Caco-2 (cell line): ENCODE measurements at regions of chr11 and their contacts with region 1.

Region 1: GRCh38 chr11:777288-778255 is at the start of gene GATD1:
- DNase-seq: peak; percentile 91 to 98
- H3K4me3 ChIP-seq: peak within 1 kb of the TSS; percentile 89
- H3K4me3 Mint-ChIP-seq: peak within 1 kb of the TSS; percentile 80
- H3K27ac Mint-ChIP-seq: peak within 1 kb of the TSS; percentile 42
- H3K4me1 ChIP-seq: peaks cover 13% of the 10 kb centered on the region
- H3K4me1 Mint-ChIP-seq: no peaks in the 10 kb centered on the region
- H3K27me3 ChIP-seq: no peaks in the 10 kb centered on the region
- H3K27me3 Mint-ChIP-seq: no peaks in the 10 kb centered on the region
- CTCF ChIP-seq: no peak
- total RNA-seq, gene GATD1: 85.0 and 91.5 TPM in 2 replicates

Region 2: DNA sequence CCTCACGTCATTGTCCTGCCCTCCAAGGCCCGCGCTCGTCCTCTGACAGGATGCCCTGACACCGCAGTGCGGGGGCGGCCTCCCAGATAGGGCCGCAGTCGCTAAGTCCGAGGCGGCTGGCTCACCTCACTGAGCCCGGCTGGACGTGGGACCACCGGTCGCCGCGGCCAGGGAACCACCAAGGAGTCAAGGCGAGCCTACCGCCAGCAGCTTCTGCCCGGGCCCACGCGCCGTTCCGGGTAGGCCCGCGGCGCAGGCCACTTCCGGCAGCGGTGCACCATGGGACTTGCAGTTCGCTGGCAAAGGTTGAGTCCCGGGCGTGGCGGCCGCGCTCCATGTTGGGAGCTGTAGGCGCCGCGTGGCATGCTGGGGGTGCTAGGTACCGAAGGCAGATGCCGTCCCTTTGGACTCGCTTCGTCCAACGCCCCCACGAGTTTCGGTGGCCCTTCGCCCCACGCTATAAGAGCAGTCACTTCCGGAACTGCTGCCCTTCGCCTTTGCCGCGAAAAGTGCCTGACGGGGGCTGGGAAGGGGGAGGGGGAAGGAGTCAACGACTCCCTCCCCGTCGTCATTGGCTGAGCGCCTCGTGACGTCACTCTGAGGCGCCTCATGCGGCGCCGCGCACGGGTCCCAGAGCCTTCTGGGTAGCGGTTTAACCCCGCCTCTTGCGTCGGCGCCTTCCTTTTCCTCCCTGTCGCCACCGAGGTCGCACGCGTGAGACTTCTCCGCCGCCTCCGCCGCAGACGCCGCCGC is 31.9 kb after region 1 on chr11 and contains the start of gene RPLP2:
- CTCF ChIA-PET with region 1: no interaction called
- POLR2A ChIA-PET with region 1: interaction called, 14 read pairs
- intact Hi-C with region 1: no loop called
- DNase-seq: peak; percentile 97
- H3K4me3 ChIP-seq: peak within 1 kb of the TSS; percentile 98
- H3K4me3 Mint-ChIP-seq: peak within 1 kb of the TSS; percentile 98
- H3K27ac Mint-ChIP-seq: peak within 1 kb of the TSS; percentile 99
- H3K4me1 ChIP-seq: peaks cover 10% of the 10 kb centered on the region
- H3K4me1 Mint-ChIP-seq: no peaks in the 10 kb centered on the region
- H3K27me3 ChIP-seq: no peaks in the 10 kb centered on the region
- H3K27me3 Mint-ChIP-seq: no peaks in the 10 kb centered on the region
- CTCF ChIP-seq: no peak
- total RNA-seq, gene RPLP2: 2,622 and 2,843 TPM in 2 replicates

Region 3: DNA sequence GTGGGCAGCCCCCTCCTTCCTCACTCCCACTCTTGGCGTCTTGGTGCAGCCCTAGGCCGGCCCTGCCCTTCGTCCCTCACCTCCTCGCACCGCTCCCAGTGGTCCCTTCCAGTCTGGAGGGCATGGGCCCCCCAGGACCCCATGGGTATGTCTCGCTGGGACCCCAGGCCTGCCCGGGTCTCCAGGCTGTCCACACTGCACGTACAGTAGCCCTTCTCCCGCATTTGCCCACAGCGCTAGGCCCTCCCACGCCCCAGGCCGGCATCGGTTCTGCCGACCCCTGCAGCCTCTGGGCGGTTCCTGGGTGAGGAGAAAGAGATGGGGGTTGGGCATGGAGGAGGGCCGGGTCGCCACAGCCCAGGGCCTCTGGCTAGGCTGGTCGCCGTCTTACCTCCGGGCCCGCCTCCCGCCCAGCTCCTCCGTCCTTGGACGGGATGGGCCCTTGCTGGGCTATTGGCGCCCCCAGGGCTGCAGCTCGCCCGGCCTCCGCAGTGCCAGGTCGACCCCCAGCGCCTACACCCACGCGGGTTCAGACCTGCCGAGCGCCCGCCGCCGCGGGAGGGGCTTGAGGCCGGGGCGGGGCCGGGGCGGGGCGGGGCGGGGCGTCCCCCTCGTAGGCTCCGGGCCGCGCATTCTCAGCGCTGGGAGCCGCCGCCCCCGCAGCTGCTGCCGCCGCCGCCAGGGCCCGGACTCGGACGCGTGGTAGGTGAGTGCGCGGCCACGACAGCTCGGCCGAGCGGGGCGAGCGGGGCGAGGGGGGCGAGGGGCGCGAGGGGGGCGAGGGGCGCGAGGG is 54.9 kb after region 1 on chr11 and contains the start of gene CD151:
- CTCF ChIA-PET with region 1: no interaction called
- POLR2A ChIA-PET with region 1: interaction called, 12 read pairs
- intact Hi-C with region 1: no loop called
- DNase-seq: peak in 1 of 2 experiments; percentile 72
- H3K4me3 ChIP-seq: peak within 1 kb of the TSS; percentile 81
- H3K4me3 Mint-ChIP-seq: peak within 1 kb of the TSS; percentile 79
- H3K27ac Mint-ChIP-seq: peak within 1 kb of the TSS; percentile 71
- H3K4me1 ChIP-seq: peaks cover 34% of the 10 kb centered on the region
- H3K4me1 Mint-ChIP-seq: peaks cover 17% of the 10 kb centered on the region
- H3K27me3 ChIP-seq: no peaks in the 10 kb centered on the region
- H3K27me3 Mint-ChIP-seq: no peaks in the 10 kb centered on the region
- CTCF ChIP-seq: no peak
- total RNA-seq, gene CD151: 268 and 302 TPM in 2 replicates

Region 4: GRCh38 chr11:1153951-1154493 is 376.4 kb after region 1 on chr11:
- CTCF ChIA-PET with region 1: no interaction called
- POLR2A ChIA-PET with region 1: no interaction called
- intact Hi-C with region 1: no loop called
- DNase-seq: peak; percentile 36 to 74
- H3K4me3 ChIP-seq: no peak overlapping the region
- H3K4me3 Mint-ChIP-seq: no peak overlapping the region
- H3K27ac Mint-ChIP-seq: no peak overlapping the region
- H3K4me1 ChIP-seq: peaks cover 29% of the 10 kb centered on the region
- H3K4me1 Mint-ChIP-seq: no peaks in the 10 kb centered on the region
- H3K27me3 ChIP-seq: no peaks in the 10 kb centered on the region
- H3K27me3 Mint-ChIP-seq: no peaks in the 10 kb centered on the region
- CTCF ChIP-seq: no peak

Region 5: DNA sequence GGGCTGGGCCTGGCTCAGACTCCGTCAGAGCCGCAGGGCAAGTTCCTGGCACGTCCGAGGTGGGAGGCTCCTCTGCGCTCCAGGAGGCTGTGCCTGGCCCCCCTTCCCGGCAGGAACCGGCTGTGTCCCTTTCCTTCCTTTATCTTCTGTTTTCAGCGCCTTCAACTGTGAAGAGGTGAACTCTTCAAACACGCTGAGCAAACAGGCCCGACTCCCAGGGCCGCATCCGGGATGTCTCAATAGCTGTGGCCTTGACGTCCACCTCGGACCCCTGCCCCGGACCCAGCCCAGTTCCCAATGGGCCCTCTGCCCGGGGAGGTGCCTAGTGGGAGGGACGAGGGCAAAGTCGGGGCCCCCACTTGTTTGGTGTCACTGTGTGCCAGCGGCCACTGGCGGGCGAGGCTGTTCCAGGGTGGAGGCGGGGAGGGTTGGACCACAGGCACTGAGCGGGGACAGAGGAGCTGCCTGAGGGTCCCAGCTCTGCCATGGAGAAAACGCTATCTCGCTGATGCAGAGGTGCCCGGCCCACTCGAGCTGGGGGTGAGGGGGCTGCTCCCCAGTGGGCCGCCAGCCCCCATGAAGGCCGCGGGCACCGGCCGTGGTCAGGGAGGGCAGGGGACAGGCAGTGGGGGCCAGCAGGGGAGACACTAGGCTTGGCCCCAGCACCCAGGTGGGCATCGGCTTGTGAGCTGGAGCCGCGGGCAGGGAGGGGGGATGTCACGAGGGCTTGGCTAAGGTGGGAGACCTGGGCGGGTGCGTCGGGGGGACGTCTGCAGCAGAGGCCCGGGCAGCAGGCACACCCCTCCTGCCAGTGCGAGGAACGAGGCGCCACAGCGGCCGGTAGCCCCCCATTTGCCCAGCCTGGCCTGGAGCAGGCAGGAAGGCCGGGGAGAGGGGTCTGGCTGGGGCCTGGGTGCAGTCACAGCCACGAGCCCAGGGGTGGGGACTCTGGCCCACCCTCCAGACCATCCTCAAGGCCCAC is 442.6 kb after region 1 on chr11:
- CTCF ChIA-PET with region 1: no interaction called
- POLR2A ChIA-PET with region 1: no interaction called
- intact Hi-C with region 1: no loop called
- DNase-seq: no peak
- H3K4me3 ChIP-seq: no peak overlapping the region
- H3K4me3 Mint-ChIP-seq: no peak overlapping the region
- H3K27ac Mint-ChIP-seq: no peak overlapping the region
- H3K4me1 ChIP-seq: no peaks in the 10 kb centered on the region
- H3K4me1 Mint-ChIP-seq: no peaks in the 10 kb centered on the region
- H3K27me3 ChIP-seq: no peaks in the 10 kb centered on the region
- H3K27me3 Mint-ChIP-seq: peaks cover 6% of the 10 kb centered on the region
- CTCF ChIP-seq: no peak